CD8-positive, alpha-beta T cell (primary cell): ENCODE measurements at regions of chr11 and their contacts with region 1.

Region 1: DNA sequence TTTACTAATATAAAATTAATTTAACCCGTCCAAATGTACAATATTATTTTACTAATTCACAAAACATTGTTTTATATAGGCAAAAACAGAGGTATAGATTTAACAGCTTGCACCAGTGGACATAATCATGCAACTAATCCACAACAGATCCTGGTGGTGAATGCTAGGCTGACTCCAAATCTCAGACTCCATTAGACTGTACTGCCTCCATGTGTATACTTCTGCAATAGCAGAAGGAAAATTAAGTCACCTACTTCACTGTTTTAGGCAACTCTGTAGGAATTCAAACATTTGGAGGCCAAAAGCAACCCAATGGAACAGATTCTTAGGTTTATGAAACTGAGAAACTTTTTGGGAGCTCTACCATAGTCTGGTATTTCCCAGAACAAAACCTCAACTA is 30.0 kb upstream of the RAB39A start:
- DNase-seq: peak in 2 of 9 experiments; percentile 36 to 43
- ATAC-seq: peak; percentile 63
- H3K4me3 ChIP-seq: no peak overlapping the region
- H3K4me3 Mint-ChIP-seq: no peak overlapping the region
- H3K27ac ChIP-seq: no peak overlapping the region
- H3K27ac Mint-ChIP-seq: no peak overlapping the region
- H3K4me1 ChIP-seq: no peaks in the 10 kb centered on the region
- H3K4me1 Mint-ChIP-seq: no peaks in the 10 kb centered on the region
- H3K27me3 ChIP-seq: peaks cover 0 to 5% of the 10 kb centered on the region in 2 experiments
- H3K27me3 Mint-ChIP-seq: no peaks in the 10 kb centered on the region
- CTCF ChIP-seq: peak; percentile 37

Region 2: DNA sequence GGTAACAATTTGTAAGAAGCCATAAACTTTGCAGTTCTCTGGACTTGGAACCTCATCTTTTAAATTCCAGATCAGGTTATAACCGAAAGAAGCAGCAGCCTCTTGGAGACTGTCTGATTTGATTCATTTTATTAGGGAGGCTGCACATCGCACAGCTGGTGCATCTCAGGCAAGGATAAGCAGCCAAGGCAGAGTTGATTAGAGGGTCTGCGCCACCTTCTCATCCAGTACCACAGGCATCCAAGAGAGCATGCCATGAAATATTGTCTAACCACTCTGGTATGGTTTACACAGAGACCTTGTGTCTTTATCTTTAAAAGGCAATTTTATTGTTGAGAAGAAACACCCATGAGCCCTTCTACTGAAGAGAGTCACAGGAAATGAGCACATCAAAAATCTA is 424.5 kb before region 1 on chr11:
- CTCF ChIA-PET with region 1: no interaction called
- POLR2A ChIA-PET with region 1: no interaction called
- intact Hi-C with region 1: no loop called
- DNase-seq: no peak
- ATAC-seq: no peak
- H3K4me3 ChIP-seq: no peak overlapping the region
- H3K4me3 Mint-ChIP-seq: no peak overlapping the region
- H3K27ac ChIP-seq: no peak overlapping the region
- H3K27ac Mint-ChIP-seq: no peak overlapping the region
- H3K4me1 ChIP-seq: no peaks in the 10 kb centered on the region
- H3K4me1 Mint-ChIP-seq: no peaks in the 10 kb centered on the region
- H3K27me3 ChIP-seq: peaks cover 0 to 3% of the 10 kb centered on the region in 2 experiments
- H3K27me3 Mint-ChIP-seq: peaks cover 40% of the 10 kb centered on the region
- CTCF ChIP-seq: no peak

Region 3: DNA sequence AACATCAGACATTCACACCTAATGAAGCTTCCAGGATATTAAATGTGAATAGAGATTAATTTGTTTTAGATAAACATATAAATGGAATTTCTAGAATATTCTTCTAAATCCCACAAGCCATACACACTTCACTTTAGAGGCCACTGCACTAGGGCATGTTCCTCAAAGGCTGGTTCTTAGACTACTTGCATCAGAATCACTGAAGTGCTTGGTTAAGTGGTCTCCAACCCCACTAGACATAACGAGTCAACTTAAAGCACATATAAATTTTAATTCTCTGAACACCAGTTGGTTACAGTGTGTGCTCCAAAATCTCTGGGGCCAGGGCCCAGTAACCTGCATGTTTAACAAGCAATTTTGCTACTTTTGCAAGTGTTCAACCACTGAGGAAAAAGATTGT is 324.8 kb before region 1 on chr11:
- CTCF ChIA-PET with region 1: interaction called, 4 read pairs
- POLR2A ChIA-PET with region 1: no interaction called
- intact Hi-C with region 1: loop called (anchors 1 kb)
- DNase-seq: no peak
- ATAC-seq: no peak
- H3K4me3 ChIP-seq: no peak overlapping the region
- H3K4me3 Mint-ChIP-seq: no peak overlapping the region
- H3K27ac ChIP-seq: no peak overlapping the region
- H3K27ac Mint-ChIP-seq: no peak overlapping the region
- H3K4me1 ChIP-seq: no peaks in the 10 kb centered on the region
- H3K4me1 Mint-ChIP-seq: no peaks in the 10 kb centered on the region
- H3K27me3 ChIP-seq: no peaks in the 10 kb centered on the region
- H3K27me3 Mint-ChIP-seq: peaks cover 4% of the 10 kb centered on the region
- CTCF ChIP-seq: no peak

Region 4: GRCh38 chr11:107799218-107799859 is 98.9 kb before region 1 on chr11:
- CTCF ChIA-PET with region 1: no interaction called
- POLR2A ChIA-PET with region 1: no interaction called
- intact Hi-C with region 1: loop called in 1 of 2 experiments (anchors 1 kb)
- DNase-seq: peak; percentile 24 to 69 (median 55)
- ATAC-seq: peak; percentile 79
- H3K4me3 ChIP-seq: no peak overlapping the region
- H3K4me3 Mint-ChIP-seq: no peak overlapping the region
- H3K27ac ChIP-seq: no peak overlapping the region
- H3K27ac Mint-ChIP-seq: no peak overlapping the region
- H3K4me1 ChIP-seq: no peaks in the 10 kb centered on the region
- H3K4me1 Mint-ChIP-seq: no peaks in the 10 kb centered on the region
- H3K27me3 ChIP-seq: no peaks in the 10 kb centered on the region
- H3K27me3 Mint-ChIP-seq: no peaks in the 10 kb centered on the region
- CTCF ChIP-seq: peak; percentile 100

Region 5: GRCh38 chr11:108101090-108101775 is 203.0 kb after region 1 on chr11:
- CTCF ChIA-PET with region 1: no interaction called
- POLR2A ChIA-PET with region 1: no interaction called
- intact Hi-C with region 1: no loop called
- DNase-seq: no peak
- ATAC-seq: no peak
- H3K4me3 ChIP-seq: no peak overlapping the region
- H3K4me3 Mint-ChIP-seq: no peak overlapping the region
- H3K27ac ChIP-seq: no peak overlapping the region
- H3K27ac Mint-ChIP-seq: no peak overlapping the region
- H3K4me1 ChIP-seq: no peaks in the 10 kb centered on the region
- H3K4me1 Mint-ChIP-seq: no peaks in the 10 kb centered on the region
- H3K27me3 ChIP-seq: no peaks in the 10 kb centered on the region
- H3K27me3 Mint-ChIP-seq: no peaks in the 10 kb centered on the region
- CTCF ChIP-seq: no peak